ENCODE measurements at regions of chr2 and their contacts with region 1.

Region 1: GRCh38 chr2:168573128-168573903 is 117.2 kb downstream of the CERS6 start:
- DNase-seq: peak; percentile 39
- H3K4me3 ChIP-seq: no peak overlapping the region
- H3K27ac ChIP-seq: no peak overlapping the region
- H3K4me1 ChIP-seq: peaks cover 41% of the 10 kb centered on the region
- H3K27me3 ChIP-seq: no peaks in the 10 kb centered on the region
- CTCF ChIP-seq: no peak

Region 2: DNA sequence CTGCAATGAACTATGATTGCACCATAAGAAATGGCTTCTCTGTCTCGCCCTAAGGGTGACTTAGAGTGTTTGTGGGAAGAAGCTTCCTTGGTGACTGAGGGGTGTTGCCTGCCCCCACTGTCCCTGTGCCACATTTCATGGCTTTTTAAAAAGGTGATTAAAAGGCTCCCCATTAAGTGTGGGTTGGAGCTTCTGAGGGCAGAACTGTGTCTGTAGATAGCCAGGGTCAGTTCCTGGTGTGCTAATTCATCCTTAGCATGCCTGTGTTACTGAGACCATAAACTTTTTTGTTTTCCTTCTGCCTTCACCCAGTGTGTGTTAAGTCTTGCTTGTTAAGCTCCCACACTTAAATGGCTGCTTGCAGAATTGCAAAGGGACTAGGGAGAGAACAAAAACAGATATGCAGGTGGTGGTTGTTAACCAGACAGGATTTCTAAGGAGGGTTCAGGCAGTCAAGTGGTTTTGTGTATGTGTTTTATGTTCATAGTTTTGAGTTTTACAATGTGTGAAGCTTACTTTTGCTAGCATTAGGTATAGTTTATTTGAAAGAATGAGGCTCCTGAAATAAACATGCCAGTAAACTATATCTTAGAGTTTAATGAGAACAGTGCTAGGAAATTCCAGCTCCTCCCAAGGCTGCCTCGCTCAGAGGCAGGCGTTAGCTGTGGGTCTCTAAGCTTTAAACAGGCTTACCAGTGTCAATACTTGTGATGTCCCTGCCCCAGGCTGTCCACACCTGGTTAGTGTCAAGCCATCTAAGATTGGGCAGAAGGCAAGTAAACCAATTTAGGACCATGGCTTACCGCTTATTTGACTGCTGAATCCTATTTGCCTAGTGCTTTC is 102.8 kb before region 1 on chr2:
- CTCF ChIA-PET with region 1: no interaction called
- dilution Hi-C with region 1: loop called (anchors 5 kb)
- in situ Hi-C with region 1: no loop called
- intact Hi-C with region 1: no loop called
- DNase-seq: no peak
- H3K4me3 ChIP-seq: no peak overlapping the region
- H3K27ac ChIP-seq: no peak overlapping the region
- H3K4me1 ChIP-seq: peaks cover under 1% of the 10 kb centered on the region
- H3K27me3 ChIP-seq: no peaks in the 10 kb centered on the region
- CTCF ChIP-seq: no peak

Region 3: GRCh38 chr2:168500516-168500915 is 72.8 kb before region 1 on chr2:
- CTCF ChIA-PET with region 1: no interaction called
- dilution Hi-C with region 1: no loop called
- in situ Hi-C with region 1: no loop called
- intact Hi-C with region 1: no loop called
- DNase-seq: no peak
- H3K4me3 ChIP-seq: no peak overlapping the region
- H3K27ac ChIP-seq: no peak overlapping the region
- H3K4me1 ChIP-seq: peaks cover under 1% of the 10 kb centered on the region
- H3K27me3 ChIP-seq: no peaks in the 10 kb centered on the region
- CTCF ChIP-seq: no peak